ENCODE measurements at regions of chr10 and their contacts with region 1.

Region 1: GRCh38 chr10:86399879-86400704 is 33.5 kb upstream of the GRID1 start:
- H3K4me3 ChIP-seq: peak overlapping the region; percentile 66
- H3K27ac ChIP-seq: peak overlapping the region; percentile 79
- H3K4me1 ChIP-seq: no peaks in the 10 kb centered on the region; the same call in 1 of the 2 replicates
- CTCF ChIP-seq: peak; percentile 98

Region 2: GRCh38 chr10:86521678-86522509 is 121.8 kb after region 1 on chr10 and contains the start of gene WAPL:
- CTCF ChIA-PET with region 1: interaction called, 7 read pairs
- POLR2A ChIA-PET with region 1: interaction called, 10 read pairs
- H3K4me3 ChIP-seq: peak within 1 kb of the TSS; percentile 83
- H3K27ac ChIP-seq: peak within 1 kb of the TSS; percentile 91
- H3K4me1 ChIP-seq: peaks cover 21% of the 10 kb centered on the region
- CTCF ChIP-seq: 0 out of 2 replicates have a peak, but pooled peaks have one; percentile 39

Region 3: GRCh38 chr10:86585037-86585725 is 185.1 kb after region 1 on chr10:
- CTCF ChIA-PET with region 1: interaction called, 14 read pairs
- POLR2A ChIA-PET with region 1: interaction called, 14 read pairs
- H3K4me3 ChIP-seq: no peak overlapping the region
- H3K27ac ChIP-seq: no peak overlapping the region
- H3K4me1 ChIP-seq: no peaks in the 10 kb centered on the region
- CTCF ChIP-seq: peak; percentile 80

Measured in HEK293 (cell line).